ENCODE measurements at regions of chr13 and their contacts with region 1.

Region 1: GRCh38 chr13:75635828-75636435 is at the start of gene LMO7:
- DNase-seq: peak in 8 of 9 experiments; percentile 19 to 75 (median 52)
- ATAC-seq: peak; percentile 57
- H3K4me3 ChIP-seq: peak within 1 kb of the TSS; percentile 65 to 82
- H3K4me3 Mint-ChIP-seq: peak within 1 kb of the TSS; percentile 84
- H3K27ac ChIP-seq: no peak within 1 kb of the TSS
- H3K27ac Mint-ChIP-seq: peak within 1 kb of the TSS; percentile 79
- H3K4me1 ChIP-seq: peaks cover 3% of the 10 kb centered on the region
- H3K4me1 Mint-ChIP-seq: peaks cover 20% of the 10 kb centered on the region
- H3K27me3 ChIP-seq: no peaks in the 10 kb centered on the region
- H3K27me3 Mint-ChIP-seq: peaks cover 7% of the 10 kb centered on the region
- CTCF ChIP-seq: no peak
- total RNA-seq, gene LMO7: 26.4 to 27.2 TPM

Region 2: GRCh38 chr13:75621147-75621546 is 14.8 kb before region 1 on chr13:
- CTCF ChIA-PET with region 1: no interaction called
- POLR2A ChIA-PET with region 1: no interaction called
- intact Hi-C with region 1: loop called in 1 of 2 experiments (anchors 1 kb)
- DNase-seq: no peak
- ATAC-seq: no peak
- H3K4me3 ChIP-seq: no peak overlapping the region
- H3K4me3 Mint-ChIP-seq: no peak overlapping the region
- H3K27ac ChIP-seq: no peak overlapping the region
- H3K27ac Mint-ChIP-seq: no peak overlapping the region
- H3K4me1 ChIP-seq: no peaks in the 10 kb centered on the region
- H3K4me1 Mint-ChIP-seq: no peaks in the 10 kb centered on the region
- H3K27me3 ChIP-seq: no peaks in the 10 kb centered on the region
- H3K27me3 Mint-ChIP-seq: no peaks in the 10 kb centered on the region
- CTCF ChIP-seq: no peak